ENCODE measurements at regions of chr11 and their contacts with region 1.

Region 1: GRCh38 chr11:108647701-108648527 is 17.0 kb upstream of the DDX10 start:
- DNase-seq: peak in 8 of 10 donors; percentile 28 to 69 (median 63)
- H3K4me3 ChIP-seq: peak overlapping the region in 1 of 59 donors; percentile 11
- H3K27ac ChIP-seq: peak overlapping the region in 18 of 59 donors; percentile 7 to 61 (median 26)
- H3K27me3 ChIP-seq: no peaks in the 10 kb centered on the region
- CTCF ChIP-seq: peak; percentile 24 to 82 (median 68)

Region 2: GRCh38 chr11:107858217-107859070 is 789.5 kb before region 1 on chr11 and contains the start of gene SLC35F2:
- intact Hi-C with region 1: no loop called
- DNase-seq: peak in 6 of 10 donors; percentile 11 to 56 (median 44)
- H3K4me3 ChIP-seq: peak within 1 kb of the TSS; percentile 49 to 92 (median 73)
- H3K27ac ChIP-seq: peak within 1 kb of the TSS in 12 of 59 donors; percentile 3 to 64 (median 22)
- H3K27me3 ChIP-seq: peaks cover 0 to 14% (median 0%) of the 10 kb centered on the region in 45 donors
- CTCF ChIP-seq: peak in 1 of 56 donors; percentile 27
- total RNA-seq, gene SLC35F2: 1.5 to 8.0 (median 4.5) TPM

Region 3: DNA sequence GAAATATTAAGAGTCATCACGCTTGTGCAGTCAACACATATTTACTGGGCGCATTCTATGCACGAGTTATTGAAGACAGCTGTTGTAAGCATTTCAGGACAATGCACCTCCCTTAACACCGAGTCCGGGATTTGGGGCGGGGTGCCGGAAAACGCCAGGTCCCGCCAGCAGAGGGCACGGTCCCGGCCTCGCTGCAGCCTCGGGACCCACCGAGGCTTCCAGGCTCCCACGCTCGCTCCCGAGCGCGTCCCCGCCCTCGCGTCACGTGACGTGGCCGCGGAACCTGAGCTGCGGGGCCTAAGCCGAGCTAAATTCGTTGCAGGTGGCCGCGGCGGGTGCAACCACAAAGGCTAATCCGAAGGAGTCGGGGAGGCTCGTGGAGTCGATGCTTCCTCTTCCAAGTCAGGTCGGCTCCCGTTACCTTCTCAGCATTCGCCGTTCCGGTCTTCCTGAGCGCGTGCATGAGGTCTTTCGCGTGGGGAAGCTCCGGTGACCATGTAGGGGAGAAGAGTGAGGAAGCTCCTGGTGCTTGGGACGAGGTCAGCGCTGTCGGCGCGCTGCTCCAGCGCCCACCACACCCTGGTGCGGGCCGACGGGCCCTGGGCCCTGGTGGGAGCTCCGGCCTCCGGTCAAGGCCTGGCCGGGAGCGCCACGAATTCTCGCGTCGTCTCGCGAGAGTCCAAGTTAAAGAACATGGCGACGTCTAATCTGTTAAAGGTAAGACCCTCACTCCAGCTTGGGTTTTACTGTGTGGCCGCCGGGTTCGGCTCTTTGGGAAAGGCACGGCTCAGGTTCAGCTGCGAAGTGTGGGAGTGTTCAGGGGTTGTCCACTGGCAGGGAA is 639.0 kb before region 1 on chr11 and contains the start of gene CUL5:
- intact Hi-C with region 1: loop called in 1 of 2 experiments (anchors 5 kb)
- DNase-seq: peak; percentile 82 to 95 (median 86)
- H3K4me3 ChIP-seq: peak within 1 kb of the TSS; percentile 62 to 100 (median 95)
- H3K27ac ChIP-seq: peak within 1 kb of the TSS; percentile 71 to 99 (median 96)
- H3K27me3 ChIP-seq: no peaks in the 10 kb centered on the region
- CTCF ChIP-seq: peak; percentile 72 to 96 (median 87)
- total RNA-seq, gene CUL5: 36.6 to 65.6 (median 52.0) TPM

Region 4: DNA sequence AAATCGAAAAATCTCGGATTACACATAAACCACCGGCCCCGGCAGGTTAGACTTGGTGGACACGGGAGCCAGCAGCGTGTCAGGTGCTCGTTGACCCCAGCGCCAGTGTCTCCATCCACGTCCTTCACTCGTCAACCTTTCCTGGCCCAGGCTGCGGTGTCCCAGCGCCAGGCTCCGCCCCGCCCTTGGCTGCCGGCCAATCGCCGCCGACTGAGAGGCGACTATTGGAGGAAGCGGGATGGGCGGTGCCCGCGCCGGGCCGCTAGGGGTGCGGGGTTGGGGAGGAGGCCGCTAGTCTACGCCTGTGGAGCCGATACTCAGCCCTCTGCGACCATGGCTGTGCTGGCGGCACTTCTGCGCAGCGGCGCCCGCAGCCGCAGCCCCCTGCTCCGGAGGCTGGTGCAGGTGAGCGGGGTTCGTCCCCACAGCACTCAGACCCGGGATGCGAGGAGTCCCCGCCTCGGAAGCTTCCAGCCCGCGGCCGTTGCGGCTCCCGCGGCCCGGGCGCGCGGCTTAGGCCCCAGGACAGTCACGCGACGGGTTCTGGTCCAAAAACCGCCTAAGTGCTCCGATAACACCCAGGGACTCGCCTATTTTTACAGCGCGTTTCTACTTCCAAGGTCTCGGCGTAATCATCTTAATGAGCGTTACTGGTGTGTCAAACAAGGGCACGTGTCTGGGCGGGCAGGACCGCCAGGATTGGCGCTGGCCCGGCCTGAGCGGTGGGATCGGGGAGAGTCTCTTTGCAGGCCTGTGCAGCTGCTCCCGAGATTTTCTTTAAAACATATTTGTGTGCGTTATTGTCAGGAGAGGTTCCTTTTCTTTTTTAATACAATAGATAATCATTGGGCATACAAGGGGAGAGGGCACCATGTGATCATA is 526.4 kb before region 1 on chr11 and contains the start of gene ACAT1:
- intact Hi-C with region 1: loop called in 1 of 2 experiments (anchors 5 kb)
- DNase-seq: peak; percentile 92 to 98 (median 94)
- H3K4me3 ChIP-seq: peak within 1 kb of the TSS; percentile 61 to 96 (median 86)
- H3K27ac ChIP-seq: peak within 1 kb of the TSS; percentile 43 to 97 (median 90)
- H3K27me3 ChIP-seq: no peaks in the 10 kb centered on the region
- CTCF ChIP-seq: peak in 48 of 56 donors; percentile 10 to 67 (median 46)
- total RNA-seq, gene ACAT1: 44.7 to 96.1 (median 72.4) TPM

Region 5: DNA sequence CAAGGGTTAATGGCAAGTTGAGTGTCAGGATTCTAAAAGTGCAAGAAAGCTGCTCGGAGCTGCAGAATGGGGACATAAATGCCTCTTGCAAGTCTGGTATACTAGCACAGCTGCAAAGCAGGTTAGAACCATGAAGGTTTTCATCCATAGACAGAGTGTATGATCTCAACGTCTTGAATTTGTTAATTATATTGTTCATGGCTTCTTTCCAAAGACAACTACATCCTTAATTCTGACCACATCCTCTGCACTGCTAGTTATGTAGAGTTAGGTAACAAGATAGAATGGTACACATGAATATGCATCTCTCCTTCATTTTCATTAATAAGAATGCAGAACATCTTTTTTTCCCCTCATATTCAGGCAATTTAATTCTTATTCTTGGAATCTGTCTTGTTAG is 88.6 kb before region 1 on chr11:
- intact Hi-C with region 1: no loop called
- DNase-seq: no peak
- H3K4me3 ChIP-seq: no peak overlapping the region
- H3K27ac ChIP-seq: no peak overlapping the region
- H3K27me3 ChIP-seq: no peaks in the 10 kb centered on the region
- CTCF ChIP-seq: no peak